Activated CD4-positive, alpha-beta memory T cell treated with anti-CD3 and anti-CD28 coated beads, Interleukin-2, amount 10 ng/mL, durations not matched to agents 7 days and 5 days (primary cell): ENCODE measurements at regions of chr1 and their contacts with region 1.

Region 1: GRCh38 chr1:109532365-109533136 is 7.1 kb upstream of the GPR61 start:
- DNase-seq: peak; percentile 92
- H3K4me3 Mint-ChIP-seq: peak overlapping the region; percentile 48
- H3K27ac Mint-ChIP-seq: peak overlapping the region; percentile 90
- H3K4me1 Mint-ChIP-seq: peaks cover 22% of the 10 kb centered on the region
- H3K27me3 Mint-ChIP-seq: no peaks in the 10 kb centered on the region

Region 2: DNA sequence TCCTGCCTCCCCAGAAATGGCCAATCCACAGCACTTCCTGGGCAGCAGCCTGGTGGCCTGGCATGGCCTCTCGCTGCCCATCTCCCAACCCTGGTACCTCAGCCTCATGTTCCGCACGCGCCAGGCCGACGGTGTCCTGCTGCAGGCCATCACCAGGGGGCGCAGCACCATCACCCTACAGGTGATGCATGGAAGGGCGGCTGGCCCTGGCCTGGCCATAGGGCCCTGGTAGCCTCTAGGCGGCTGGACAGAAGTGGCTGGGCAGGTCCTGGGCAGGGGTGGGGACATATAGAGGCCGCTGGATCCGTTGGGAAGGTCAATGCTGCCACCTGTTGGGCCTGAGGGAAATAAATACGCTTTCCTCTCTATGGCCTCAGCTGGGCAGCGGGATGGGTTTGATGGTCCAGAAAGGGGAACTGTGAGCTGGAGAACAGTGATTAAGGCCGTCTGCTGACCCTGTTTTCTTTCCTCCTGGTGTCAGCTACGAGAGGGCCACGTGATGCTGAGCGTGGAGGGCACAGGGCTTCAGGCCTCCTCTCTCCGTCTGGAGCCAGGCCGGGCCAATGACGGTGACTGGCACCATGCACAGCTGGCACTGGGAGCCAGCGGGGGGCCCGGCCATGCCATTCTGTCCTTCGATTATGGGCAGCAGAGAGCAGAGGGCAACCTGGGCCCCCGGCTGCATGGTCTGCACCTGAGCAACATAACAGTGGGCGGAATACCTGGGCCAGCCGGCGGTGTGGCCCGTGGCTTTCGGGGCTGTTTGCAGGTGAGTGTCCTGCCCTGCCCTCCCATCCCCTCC is 268.8 kb before region 1 on chr1:
- CTCF ChIA-PET with region 1: interaction called, 22 read pairs
- POLR2A ChIA-PET with region 1: interaction called, 3 read pairs
- DNase-seq: peak; percentile 79
- H3K4me3 Mint-ChIP-seq: no peak overlapping the region
- H3K27ac Mint-ChIP-seq: no peak overlapping the region
- H3K4me1 Mint-ChIP-seq: peaks cover 2% of the 10 kb centered on the region
- H3K27me3 Mint-ChIP-seq: no peaks in the 10 kb centered on the region

Region 3: DNA sequence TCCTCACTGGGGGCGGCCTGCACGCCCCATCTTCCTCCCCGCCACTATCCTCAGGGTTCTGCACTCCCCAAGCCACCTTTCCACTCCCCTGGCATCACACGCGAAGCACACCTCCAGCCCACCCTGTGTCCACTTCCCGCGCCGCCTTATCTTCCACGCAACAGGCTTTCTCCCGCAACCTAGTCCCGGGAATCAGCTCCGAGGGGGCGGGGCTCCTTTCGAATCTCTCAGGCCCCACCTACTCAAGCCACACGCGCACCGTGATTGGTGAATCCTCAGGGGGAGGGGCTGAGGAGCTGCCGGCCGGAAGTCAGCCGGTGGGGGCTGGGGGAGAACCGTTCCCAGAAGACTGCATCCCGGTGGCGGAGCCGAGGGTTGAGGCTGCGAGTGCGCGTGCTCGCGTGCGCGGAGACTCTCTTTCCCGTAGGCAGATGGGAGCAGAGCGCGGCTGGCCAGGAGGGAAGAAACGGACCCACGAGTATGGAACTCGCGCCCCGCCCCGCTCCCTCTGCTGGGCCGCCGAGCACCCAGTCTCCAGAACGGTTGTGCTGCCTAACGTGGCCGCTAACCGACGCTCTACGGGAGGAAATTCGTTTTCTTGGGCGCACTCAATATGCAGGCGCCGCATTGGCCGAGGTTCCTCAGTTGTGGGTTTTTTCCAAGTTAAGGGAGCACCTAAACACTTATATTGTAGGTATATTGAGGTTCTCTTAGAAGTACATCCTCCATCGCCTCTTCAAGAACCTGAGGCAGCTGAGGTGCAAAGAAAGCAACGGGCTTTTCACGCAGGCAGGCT is 249.4 kb before region 1 on chr1 and contains the start of gene PSRC1:
- CTCF ChIA-PET with region 1: interaction called, 57 read pairs
- POLR2A ChIA-PET with region 1: interaction called, 5 read pairs
- DNase-seq: peak; percentile 92
- H3K4me3 Mint-ChIP-seq: peak within 1 kb of the TSS; percentile 99
- H3K27ac Mint-ChIP-seq: peak within 1 kb of the TSS; percentile 85
- H3K4me1 Mint-ChIP-seq: peaks cover 33% of the 10 kb centered on the region
- H3K27me3 Mint-ChIP-seq: peaks cover 3% of the 10 kb centered on the region
- total RNA-seq, gene PSRC1: 27.0 to 28.7 TPM

Region 4: GRCh38 chr1:109483672-109484518 is 48.7 kb before region 1 on chr1 and contains the start of gene ATXN7L2:
- CTCF ChIA-PET with region 1: interaction called, 779 read pairs
- POLR2A ChIA-PET with region 1: interaction called, 46 read pairs
- DNase-seq: peak; percentile 94
- H3K4me3 Mint-ChIP-seq: peak within 1 kb of the TSS; percentile 93
- H3K27ac Mint-ChIP-seq: peak within 1 kb of the TSS; percentile 79
- H3K4me1 Mint-ChIP-seq: peaks cover 36% of the 10 kb centered on the region
- H3K27me3 Mint-ChIP-seq: peaks cover 17% of the 10 kb centered on the region
- total RNA-seq, gene ATXN7L2: 7.0 to 7.6 TPM

Region 5: GRCh38 chr1:109499661-109500536 is 32.7 kb before region 1 on chr1:
- CTCF ChIA-PET with region 1: interaction called, 779 read pairs
- POLR2A ChIA-PET with region 1: interaction called, 54 read pairs
- DNase-seq: peak; percentile 54
- H3K4me3 Mint-ChIP-seq: no peak overlapping the region
- H3K27ac Mint-ChIP-seq: peak overlapping the region; percentile 47
- H3K4me1 Mint-ChIP-seq: peaks cover 85% of the 10 kb centered on the region
- H3K27me3 Mint-ChIP-seq: no peaks in the 10 kb centered on the region

Region 6: DNA sequence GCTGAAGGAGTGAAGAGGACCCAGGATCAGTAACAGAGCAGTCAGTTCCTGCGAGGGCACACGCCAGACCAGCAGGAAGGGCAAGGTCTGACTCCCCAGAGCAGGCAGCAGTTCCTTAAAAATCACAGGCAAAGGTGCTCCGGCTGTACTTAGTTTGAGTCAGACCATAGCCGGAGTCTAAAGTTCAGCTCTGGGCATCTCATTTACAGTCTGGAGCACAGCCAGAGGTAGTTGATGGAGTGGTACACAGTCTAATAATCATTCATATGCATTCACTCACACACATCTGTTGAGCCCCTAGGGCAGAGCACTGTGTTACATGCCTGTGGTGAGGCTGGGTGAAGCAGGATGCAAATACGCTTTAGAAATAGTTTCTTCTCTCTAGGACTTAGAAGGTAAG is 15.7 kb before region 1 on chr1:
- CTCF ChIA-PET with region 1: interaction called, 23 read pairs
- POLR2A ChIA-PET with region 1: interaction called, 5 read pairs
- DNase-seq: no peak
- H3K4me3 Mint-ChIP-seq: no peak overlapping the region
- H3K27ac Mint-ChIP-seq: no peak overlapping the region
- H3K4me1 Mint-ChIP-seq: no peaks in the 10 kb centered on the region
- H3K27me3 Mint-ChIP-seq: peaks cover 6% of the 10 kb centered on the region

Region 7: DNA sequence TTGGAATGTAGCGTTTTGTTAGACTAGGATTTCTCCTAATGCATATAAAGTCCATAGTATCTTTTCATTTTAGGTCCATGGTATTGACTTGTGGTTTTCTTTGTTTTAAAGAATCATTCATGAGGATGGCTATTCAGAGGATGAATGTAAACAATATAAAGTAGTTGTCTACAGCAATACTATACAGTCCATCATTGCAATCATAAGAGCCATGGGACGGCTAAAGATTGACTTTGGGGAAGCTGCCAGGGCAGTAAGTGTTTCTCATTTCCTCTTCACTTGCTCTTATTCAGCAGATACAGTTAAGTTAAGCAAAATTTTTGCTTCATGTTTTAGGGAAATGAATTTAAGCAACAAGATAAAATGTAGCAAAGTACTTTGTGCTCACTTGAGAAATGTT is 41.2 kb after region 1 on chr1:
- CTCF ChIA-PET with region 1: no interaction called
- POLR2A ChIA-PET with region 1: no interaction called
- DNase-seq: no peak
- H3K4me3 Mint-ChIP-seq: no peak overlapping the region
- H3K27ac Mint-ChIP-seq: no peak overlapping the region
- H3K4me1 Mint-ChIP-seq: peaks cover 11% of the 10 kb centered on the region
- H3K27me3 Mint-ChIP-seq: no peaks in the 10 kb centered on the region

Region 8: DNA sequence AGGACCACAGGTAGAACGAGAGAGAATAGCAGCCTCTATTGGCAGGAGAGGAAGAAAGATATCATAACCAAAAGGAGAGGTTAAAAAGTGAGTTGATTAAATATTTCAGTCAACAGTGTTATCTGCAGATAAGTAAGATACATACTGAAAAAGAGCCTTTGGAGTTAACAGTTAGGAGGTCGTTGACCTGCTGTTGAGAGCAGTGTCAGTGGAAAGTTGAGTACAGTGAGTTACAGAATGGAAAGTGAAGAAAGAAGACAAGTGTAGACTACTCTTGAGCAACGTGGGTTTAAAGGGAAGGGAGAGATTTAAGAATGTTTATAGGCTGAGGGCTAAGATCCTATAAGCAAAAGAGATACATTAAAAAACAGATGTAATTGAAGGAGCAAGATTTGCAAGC is 56.6 kb after region 1 on chr1:
- CTCF ChIA-PET with region 1: no interaction called
- POLR2A ChIA-PET with region 1: no interaction called
- DNase-seq: no peak
- H3K4me3 Mint-ChIP-seq: no peak overlapping the region
- H3K27ac Mint-ChIP-seq: no peak overlapping the region
- H3K4me1 Mint-ChIP-seq: no peaks in the 10 kb centered on the region
- H3K27me3 Mint-ChIP-seq: no peaks in the 10 kb centered on the region